ENCODE measurements at regions of chr7 and their contacts with region 1.

Region 1: DNA sequence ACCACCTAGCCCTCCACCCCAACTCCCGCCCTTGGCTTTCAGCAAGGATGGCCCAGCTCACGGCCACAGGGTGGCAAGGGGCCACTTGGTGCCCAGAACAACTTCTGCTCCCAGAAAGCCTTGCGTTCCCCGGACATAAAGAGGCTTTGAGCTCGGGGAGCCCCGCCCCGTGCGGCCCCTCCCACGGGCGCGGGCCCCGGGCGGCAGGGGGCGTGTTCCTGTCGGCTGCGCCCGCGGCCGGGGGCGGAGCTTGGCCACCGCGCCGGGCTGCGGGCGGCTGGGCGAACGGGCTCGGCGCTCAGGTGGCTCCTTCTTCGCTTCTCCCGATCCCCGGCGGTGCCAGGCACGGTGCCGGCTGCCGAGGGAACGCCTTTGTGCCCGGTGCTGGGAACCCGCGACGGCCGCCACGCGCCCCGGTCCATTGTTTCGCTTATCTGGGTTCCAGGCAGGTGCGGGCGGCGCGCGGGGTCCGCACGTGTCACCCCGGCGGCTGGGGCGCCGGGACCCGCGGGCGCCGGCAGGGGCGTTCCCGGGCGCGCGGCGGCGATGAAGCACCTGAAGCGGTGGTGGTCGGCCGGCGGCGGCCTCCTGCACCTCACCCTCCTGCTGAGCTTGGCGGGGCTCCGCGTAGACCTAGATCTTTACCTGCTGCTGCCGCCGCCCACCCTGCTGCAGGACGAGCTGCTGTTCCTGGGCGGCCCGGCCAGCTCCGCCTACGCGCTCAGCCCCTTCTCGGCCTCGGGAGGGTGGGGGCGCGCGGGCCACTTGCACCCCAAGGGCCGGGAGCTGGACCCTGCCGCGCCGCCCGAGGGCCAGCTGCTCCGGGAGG is at the start of gene NFE2L3:
- DNase-seq: peak; percentile 90
- H3K4me3 Mint-ChIP-seq: peak within 1 kb of the TSS; percentile 98
- H3K27ac Mint-ChIP-seq: peak within 1 kb of the TSS; percentile 92
- H3K4me1 Mint-ChIP-seq: peaks cover 51% of the 10 kb centered on the region
- H3K27me3 Mint-ChIP-seq: no peaks in the 10 kb centered on the region
- total RNA-seq, gene NFE2L3: 27.3 to 30.3 TPM

Region 2: DNA sequence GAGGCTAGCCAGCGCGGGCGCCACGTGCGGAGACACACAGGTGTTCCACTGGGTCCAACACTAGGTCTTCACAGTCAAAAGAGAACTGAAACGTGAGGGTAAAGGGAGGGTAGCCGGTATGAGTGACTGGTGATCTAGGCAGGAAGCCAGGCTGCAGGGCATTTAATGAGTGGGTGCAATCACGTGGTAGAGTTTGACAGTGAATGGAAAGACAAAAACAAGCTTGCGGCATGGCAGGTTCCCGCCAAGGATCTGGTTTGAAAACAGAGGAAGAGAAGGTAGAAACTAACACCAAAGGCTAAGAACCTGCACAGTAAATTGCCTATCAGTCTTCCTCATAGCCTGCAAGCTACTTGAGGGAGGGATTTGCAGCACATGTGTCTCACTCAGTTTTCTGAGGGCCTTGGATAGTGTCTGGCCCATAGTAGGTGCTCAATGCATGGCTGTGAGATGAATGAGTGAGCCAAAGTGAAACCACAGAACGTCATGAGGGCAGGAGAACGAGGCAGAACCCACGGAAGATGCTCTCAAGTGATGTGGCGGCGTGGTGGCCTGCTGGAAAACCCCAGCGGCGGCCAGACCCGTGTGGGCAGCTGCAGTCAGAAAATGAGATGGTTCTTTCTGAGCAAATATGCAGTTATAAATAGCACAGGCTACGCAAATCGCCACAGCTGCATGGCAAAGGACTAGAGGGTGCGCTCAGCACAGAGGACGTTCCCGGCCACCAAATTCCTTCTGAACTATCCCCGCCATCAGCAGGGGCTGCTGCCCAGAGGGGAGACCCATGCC is 183.8 kb before region 1 on chr7:
- CTCF ChIA-PET with region 1: interaction called, 3 read pairs
- POLR2A ChIA-PET with region 1: no interaction called
- intact Hi-C with region 1: loop called (anchors 1 kb)
- DNase-seq: peak; percentile 87
- H3K4me3 Mint-ChIP-seq: peak overlapping the region; percentile 7
- H3K27ac Mint-ChIP-seq: peak overlapping the region; percentile 55
- H3K4me1 Mint-ChIP-seq: peaks cover 23% of the 10 kb centered on the region
- H3K27me3 Mint-ChIP-seq: peaks cover 31% of the 10 kb centered on the region

Region 3: GRCh38 chr7:26078437-26079336 is 73.5 kb before region 1 on chr7:
- CTCF ChIA-PET with region 1: interaction called, 11 read pairs
- POLR2A ChIA-PET with region 1: no interaction called
- intact Hi-C with region 1: loop called (anchors 1 kb)
- DNase-seq: peak; percentile 87
- H3K4me3 Mint-ChIP-seq: no peak overlapping the region
- H3K27ac Mint-ChIP-seq: no peak overlapping the region
- H3K4me1 Mint-ChIP-seq: peaks cover 4% of the 10 kb centered on the region
- H3K27me3 Mint-ChIP-seq: peaks cover 24% of the 10 kb centered on the region

Region 4: DNA sequence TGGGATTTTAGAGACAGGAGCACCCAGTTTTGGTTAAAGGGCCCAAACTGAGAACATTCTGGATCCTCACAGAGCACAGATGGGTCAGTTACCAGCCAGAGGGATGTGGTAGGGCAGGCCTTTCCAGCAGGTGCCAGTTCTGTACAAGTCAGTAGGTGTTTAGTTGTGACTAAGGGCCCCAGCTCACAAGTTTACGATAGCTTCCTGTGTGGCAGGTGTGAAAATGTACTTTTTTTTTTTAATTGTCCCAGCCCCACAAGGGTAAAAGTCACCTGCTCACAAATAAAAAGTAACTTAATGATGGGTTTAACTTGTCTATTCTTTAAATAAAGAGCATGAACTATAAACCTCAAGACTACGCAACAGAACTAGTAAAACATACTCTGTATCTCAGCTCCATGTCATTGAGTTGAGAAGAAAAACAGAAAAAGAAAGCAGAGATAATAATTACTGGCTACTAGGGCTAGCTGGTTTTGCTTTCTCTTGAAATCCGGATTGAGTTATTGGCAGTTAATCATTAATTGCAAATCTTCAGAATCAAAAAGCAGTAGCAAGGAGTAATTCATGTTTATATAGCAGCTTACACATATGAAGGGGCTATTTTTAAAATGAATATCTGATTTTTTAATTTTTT is 15.3 kb after region 1 on chr7:
- CTCF ChIA-PET with region 1: interaction called, 9 read pairs
- POLR2A ChIA-PET with region 1: interaction called, 38 read pairs
- intact Hi-C with region 1: loop called (anchors 1 kb)
- DNase-seq: peak; percentile 65
- H3K4me3 Mint-ChIP-seq: peak overlapping the region; percentile 11
- H3K27ac Mint-ChIP-seq: peak overlapping the region; percentile 94
- H3K4me1 Mint-ChIP-seq: peaks cover 48% of the 10 kb centered on the region
- H3K27me3 Mint-ChIP-seq: no peaks in the 10 kb centered on the region

Region 5: GRCh38 chr7:26187380-26188205 is 35.4 kb after region 1 on chr7:
- CTCF ChIA-PET with region 1: interaction called, 17 read pairs
- POLR2A ChIA-PET with region 1: interaction called, 160 read pairs
- intact Hi-C with region 1: loop called (anchors 1 kb)
- DNase-seq: no peak
- H3K4me3 Mint-ChIP-seq: peak overlapping the region; percentile 10
- H3K27ac Mint-ChIP-seq: peak overlapping the region; percentile 81
- H3K4me1 Mint-ChIP-seq: peaks cover 70% of the 10 kb centered on the region
- H3K27me3 Mint-ChIP-seq: no peaks in the 10 kb centered on the region

Region 6: GRCh38 chr7:26193432-26194207 is 41.5 kb after region 1 on chr7:
- CTCF ChIA-PET with region 1: interaction called, 17 read pairs
- POLR2A ChIA-PET with region 1: interaction called, 160 read pairs
- intact Hi-C with region 1: loop called (anchors 1 kb)
- DNase-seq: no peak
- H3K4me3 Mint-ChIP-seq: peak overlapping the region; percentile 69
- H3K27ac Mint-ChIP-seq: peak overlapping the region; percentile 84
- H3K4me1 Mint-ChIP-seq: peaks cover 80% of the 10 kb centered on the region
- H3K27me3 Mint-ChIP-seq: no peaks in the 10 kb centered on the region

Region 7: GRCh38 chr7:26843705-26844104 is 691.5 kb after region 1 on chr7:
- CTCF ChIA-PET with region 1: no interaction called
- POLR2A ChIA-PET with region 1: no interaction called
- intact Hi-C with region 1: no loop called
- DNase-seq: no peak
- H3K4me3 Mint-ChIP-seq: no peak overlapping the region
- H3K27ac Mint-ChIP-seq: no peak overlapping the region
- H3K4me1 Mint-ChIP-seq: no peaks in the 10 kb centered on the region
- H3K27me3 Mint-ChIP-seq: peaks cover 2% of the 10 kb centered on the region

Region 8: DNA sequence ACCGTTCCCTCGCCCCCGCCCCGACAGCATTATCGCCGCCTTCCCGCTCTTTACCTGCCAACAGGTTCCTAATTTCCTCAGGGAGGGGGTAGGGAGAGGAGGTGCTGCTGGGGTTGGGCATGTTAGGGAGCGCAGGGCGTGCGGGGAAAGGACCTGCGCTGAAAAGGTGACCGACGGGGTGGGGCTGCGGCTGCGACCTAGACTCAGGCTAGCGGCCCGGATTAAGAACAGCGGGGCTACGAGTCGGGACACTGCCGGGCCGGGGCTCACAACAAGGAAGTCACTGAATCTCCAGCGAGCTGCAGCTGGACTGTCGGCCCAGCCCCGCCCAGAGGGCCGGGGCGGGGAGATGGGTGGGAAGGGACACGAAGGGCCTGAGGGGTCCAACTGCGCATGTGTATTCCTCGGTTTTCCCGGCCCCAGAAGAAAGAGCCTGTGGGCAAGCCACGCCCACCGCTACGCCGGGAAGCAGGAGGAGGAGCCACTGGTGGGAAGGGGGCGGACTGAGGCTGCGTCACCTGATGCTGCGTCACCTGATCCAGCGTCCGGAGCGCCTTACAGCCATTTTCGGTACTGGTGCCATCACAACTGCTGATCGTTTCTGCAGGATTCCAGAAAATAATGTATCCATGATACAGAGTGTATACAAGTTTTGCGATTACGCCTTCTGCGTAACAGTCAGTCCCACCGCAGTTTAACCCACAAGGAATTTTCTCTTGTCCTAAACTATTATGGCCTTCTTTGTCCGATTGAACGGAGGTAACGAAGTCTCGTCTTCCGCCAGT is 712.3 kb after region 1 on chr7 and contains the start of gene SKAP2:
- CTCF ChIA-PET with region 1: no interaction called
- POLR2A ChIA-PET with region 1: no interaction called
- intact Hi-C with region 1: loop called (anchors 5 kb)
- DNase-seq: peak; percentile 94
- H3K4me3 Mint-ChIP-seq: peak within 1 kb of the TSS; percentile 95
- H3K27ac Mint-ChIP-seq: peak within 1 kb of the TSS; percentile 74
- H3K4me1 Mint-ChIP-seq: peaks cover 18% of the 10 kb centered on the region
- H3K27me3 Mint-ChIP-seq: peaks cover 27% of the 10 kb centered on the region
- total RNA-seq, gene SKAP2: 11.2 to 11.9 TPM

Measured in activated CD4-positive, alpha-beta memory T cell treated with anti-CD3 and anti-CD28 coated beads for 36 hours (primary cell).